ENCODE measurements at regions of chr12 and their contacts with region 1.

Region 1: GRCh38 chr12:92505254-92506231 is 197.2 kb upstream of the PLEKHG7 start:
- DNase-seq: peak; percentile 20
- ATAC-seq: peak; percentile 47
- H3K4me3 Mint-ChIP-seq: peak overlapping the region; percentile 77
- H3K27ac Mint-ChIP-seq: peak overlapping the region; percentile 94
- H3K4me1 Mint-ChIP-seq: peaks cover 64% of the 10 kb centered on the region
- H3K27me3 Mint-ChIP-seq: no peaks in the 10 kb centered on the region
- CTCF ChIP-seq: no peak

Region 2: GRCh38 chr12:91289906-91290305 is 1215.6 kb before region 1 on chr12:
- CTCF ChIA-PET with region 1: no interaction called
- POLR2A ChIA-PET with region 1: no interaction called
- intact Hi-C with region 1: no loop called
- DNase-seq: no peak
- ATAC-seq: no peak
- H3K4me3 Mint-ChIP-seq: no peak overlapping the region
- H3K27ac Mint-ChIP-seq: no peak overlapping the region
- H3K4me1 Mint-ChIP-seq: no peaks in the 10 kb centered on the region
- H3K27me3 Mint-ChIP-seq: no peaks in the 10 kb centered on the region
- CTCF ChIP-seq: no peak

Region 3: GRCh38 chr12:92466391-92467305 is 38.9 kb before region 1 on chr12:
- CTCF ChIA-PET with region 1: interaction called, 6 read pairs
- POLR2A ChIA-PET with region 1: interaction called, 48 read pairs
- intact Hi-C with region 1: loop called (anchors 1 kb)
- DNase-seq: peak; percentile 51
- ATAC-seq: peak; percentile 74
- H3K4me3 Mint-ChIP-seq: peak overlapping the region; percentile 93
- H3K27ac Mint-ChIP-seq: peak overlapping the region; percentile 99
- H3K4me1 Mint-ChIP-seq: peaks cover 94% of the 10 kb centered on the region
- H3K27me3 Mint-ChIP-seq: no peaks in the 10 kb centered on the region
- CTCF ChIP-seq: no peak

Region 4: DNA sequence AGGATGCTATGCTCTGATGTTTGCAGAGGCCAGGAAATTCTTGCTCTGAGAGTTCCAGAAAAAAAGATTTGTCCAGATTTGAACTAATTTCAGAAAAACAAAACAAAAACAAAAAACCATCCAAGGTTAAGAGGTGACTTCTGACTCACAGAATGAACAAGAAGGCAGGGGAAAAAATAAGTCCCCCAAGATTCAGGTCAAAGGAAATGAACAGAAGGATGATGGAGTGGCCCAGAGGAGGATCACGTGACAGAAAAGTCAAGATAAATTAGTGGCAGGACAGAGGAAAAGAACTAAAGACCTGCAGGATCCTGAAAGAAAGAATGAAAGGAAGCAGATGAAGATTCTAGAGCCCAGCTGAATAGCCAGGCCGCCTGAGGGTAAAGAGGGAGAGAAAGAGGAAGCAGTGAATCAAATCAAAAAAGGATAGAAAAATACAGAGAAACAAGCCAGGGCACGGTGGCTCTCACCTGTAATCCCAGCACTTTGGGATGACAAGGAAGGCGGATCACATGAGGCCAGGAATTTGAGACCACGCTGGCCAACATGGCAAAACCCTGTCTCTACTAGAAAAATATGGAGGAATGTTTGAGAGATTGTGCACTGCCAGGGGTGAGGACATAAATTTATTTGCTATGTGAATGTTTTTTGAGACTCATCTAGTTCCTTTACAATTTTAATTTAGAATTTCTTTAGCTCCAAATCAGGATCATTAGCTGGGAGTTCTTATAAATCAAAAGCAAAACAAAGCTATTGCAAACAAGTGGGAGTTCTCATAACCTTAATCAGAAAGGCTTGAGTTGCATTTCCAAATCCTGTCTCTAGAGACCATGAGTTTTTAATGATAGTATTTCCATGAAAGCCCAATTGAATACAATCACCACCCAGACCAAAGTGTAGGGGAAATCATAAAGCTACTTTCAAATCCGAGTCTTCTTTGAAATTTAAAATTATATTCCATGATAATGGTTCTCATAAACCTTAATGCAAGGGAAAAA is 19.9 kb before region 1 on chr12:
- CTCF ChIA-PET with region 1: interaction called, 6 read pairs
- POLR2A ChIA-PET with region 1: interaction called, 165 read pairs
- intact Hi-C with region 1: loop called (anchors 1 kb)
- DNase-seq: no peak
- ATAC-seq: peak; percentile 41
- H3K4me3 Mint-ChIP-seq: peak overlapping the region; percentile 50
- H3K27ac Mint-ChIP-seq: peak overlapping the region; percentile 85
- H3K4me1 Mint-ChIP-seq: peaks cover 88% of the 10 kb centered on the region
- H3K27me3 Mint-ChIP-seq: no peaks in the 10 kb centered on the region
- CTCF ChIP-seq: no peak

Region 5: DNA sequence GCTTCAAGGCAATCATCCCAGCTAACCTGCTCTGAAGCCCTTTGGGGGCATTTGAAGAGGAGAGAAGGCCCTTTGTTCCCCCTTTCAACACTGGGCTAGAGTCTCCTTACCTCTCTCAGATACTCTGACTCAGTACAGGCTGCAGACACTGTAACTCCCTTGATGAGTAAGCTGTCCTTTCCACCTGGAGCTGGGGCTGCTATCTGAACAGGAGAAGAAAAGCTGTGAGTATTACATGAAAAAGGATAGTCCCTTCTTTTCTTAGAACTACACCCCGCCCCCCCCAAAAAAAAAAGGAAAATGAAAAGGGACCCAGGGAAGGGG is 10.7 kb after region 1 on chr12:
- CTCF ChIA-PET with region 1: interaction called, 3 read pairs
- POLR2A ChIA-PET with region 1: interaction called, 31 read pairs
- intact Hi-C with region 1: no loop called
- DNase-seq: no peak
- ATAC-seq: peak; percentile 62
- H3K4me3 Mint-ChIP-seq: no peak overlapping the region
- H3K27ac Mint-ChIP-seq: peak overlapping the region; percentile 37
- H3K4me1 Mint-ChIP-seq: peaks cover 48% of the 10 kb centered on the region
- H3K27me3 Mint-ChIP-seq: no peaks in the 10 kb centered on the region
- CTCF ChIP-seq: no peak

Region 6: DNA sequence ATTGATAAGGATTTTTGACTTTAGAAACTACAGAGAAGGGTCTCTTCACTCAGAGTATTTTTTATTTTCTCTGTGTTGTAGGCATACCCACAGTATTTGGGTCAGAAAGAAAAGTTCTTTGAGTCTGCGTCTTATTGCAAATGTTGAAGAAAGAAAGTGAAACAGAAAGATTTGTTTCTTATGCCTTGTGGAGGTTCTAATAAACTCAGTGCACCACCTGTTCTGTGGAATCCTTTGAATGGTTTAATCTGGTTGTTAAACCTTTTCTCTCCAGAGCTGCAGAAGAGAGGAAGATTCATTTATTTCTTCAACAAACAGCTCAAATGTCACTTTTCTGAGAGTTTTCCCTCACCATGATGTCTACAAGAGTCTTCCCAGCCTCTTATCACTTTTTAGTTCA is 50.6 kb after region 1 on chr12:
- CTCF ChIA-PET with region 1: interaction called, 4 read pairs
- POLR2A ChIA-PET with region 1: interaction called, 21 read pairs
- intact Hi-C with region 1: loop called (anchors 2 kb)
- DNase-seq: no peak
- ATAC-seq: peak; percentile 33
- H3K4me3 Mint-ChIP-seq: peak overlapping the region; percentile 69
- H3K27ac Mint-ChIP-seq: peak overlapping the region; percentile 90
- H3K4me1 Mint-ChIP-seq: peaks cover 64% of the 10 kb centered on the region
- H3K27me3 Mint-ChIP-seq: no peaks in the 10 kb centered on the region
- CTCF ChIP-seq: no peak

Region 7: GRCh38 chr12:92629349-92630065 is 124.0 kb after region 1 on chr12:
- CTCF ChIA-PET with region 1: no interaction called
- POLR2A ChIA-PET with region 1: no interaction called
- intact Hi-C with region 1: no loop called
- DNase-seq: no peak
- ATAC-seq: no peak
- H3K4me3 Mint-ChIP-seq: no peak overlapping the region
- H3K27ac Mint-ChIP-seq: no peak overlapping the region
- H3K4me1 Mint-ChIP-seq: no peaks in the 10 kb centered on the region
- H3K27me3 Mint-ChIP-seq: peaks cover 4% of the 10 kb centered on the region
- CTCF ChIP-seq: no peak

Region 8: GRCh38 chr12:92654929-92655328 is 149.4 kb after region 1 on chr12:
- CTCF ChIA-PET with region 1: no interaction called
- POLR2A ChIA-PET with region 1: no interaction called
- intact Hi-C with region 1: no loop called
- DNase-seq: no peak
- ATAC-seq: no peak
- H3K4me3 Mint-ChIP-seq: no peak overlapping the region
- H3K27ac Mint-ChIP-seq: no peak overlapping the region
- H3K4me1 Mint-ChIP-seq: peaks cover 2% of the 10 kb centered on the region
- H3K27me3 Mint-ChIP-seq: no peaks in the 10 kb centered on the region
- CTCF ChIP-seq: no peak

Measured in activated B cell treated with CpG ODN at 0.5 μM for 24 hours (primary cell).